ENCODE measurements at regions of chr7 and their contacts with region 1.

Region 1: GRCh38 chr7:140316165-140316661 is 82.1 kb downstream of the SLC37A3 start:
- DNase-seq: peak; percentile 91 to 93
- H3K4me3 ChIP-seq: peak overlapping the region; percentile 27 to 57
- H3K27ac ChIP-seq: peak overlapping the region; percentile 52 to 87
- H3K4me1 ChIP-seq: peaks cover 4 to 8% of the 10 kb centered on the region in 2 donors
- H3K27me3 ChIP-seq: no peaks in the 10 kb centered on the region
- CTCF ChIP-seq: no peak

Region 2: DNA sequence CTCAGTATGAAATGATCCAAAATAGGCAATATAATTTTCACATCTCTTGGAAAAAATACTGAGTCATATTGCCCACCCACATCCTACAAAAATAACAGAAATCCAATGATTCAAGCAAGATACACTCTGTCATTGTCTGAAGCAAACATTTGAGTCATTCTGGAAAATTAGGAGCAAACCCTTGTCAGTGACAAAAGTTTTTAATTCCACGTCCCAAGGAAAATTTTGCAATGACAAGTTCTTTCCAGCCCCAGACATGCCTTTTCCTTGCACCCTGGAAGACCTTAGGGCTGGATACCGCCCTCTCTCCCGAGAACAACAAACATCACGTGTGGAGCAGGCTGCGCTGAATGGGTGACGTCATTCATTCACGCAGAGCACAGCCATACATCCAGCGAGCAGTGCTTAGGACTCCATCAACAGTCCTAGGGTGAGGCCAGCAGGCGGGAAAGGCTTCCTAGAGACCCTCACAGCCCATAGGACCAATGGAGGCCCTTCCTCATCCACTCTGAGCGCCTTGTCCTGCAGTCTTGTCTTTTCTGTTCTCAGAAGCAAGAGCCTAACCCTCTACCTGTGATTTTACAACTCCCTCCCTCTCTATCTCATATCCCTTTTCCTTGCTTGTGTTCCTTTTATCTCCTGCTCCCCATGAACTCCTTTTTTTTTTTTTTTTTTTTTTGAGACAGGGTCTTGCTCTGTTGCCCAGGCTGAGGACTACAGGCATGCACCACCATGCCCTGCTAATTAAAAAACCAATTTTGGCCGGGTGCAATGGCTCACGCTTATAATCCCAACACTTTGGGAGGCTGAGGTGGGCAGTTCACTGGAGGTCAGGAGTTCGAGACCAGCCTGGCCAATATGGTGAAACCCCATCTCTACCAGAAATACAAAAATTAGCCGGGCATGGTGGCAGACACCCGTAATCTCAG is 115.9 kb before region 1 on chr7:
- intact Hi-C with region 1: loop called (anchors 5 kb)
- DNase-seq: peak; percentile 45 to 86
- H3K4me3 ChIP-seq: no peak overlapping the region
- H3K27ac ChIP-seq: peak overlapping the region; percentile 61 to 67
- H3K4me1 ChIP-seq: peaks cover 0 to 9% of the 10 kb centered on the region in 2 donors
- H3K27me3 ChIP-seq: no peaks in the 10 kb centered on the region
- CTCF ChIP-seq: no peak